HEK293 (cell line): ENCODE measurements at regions of chrX and their contacts with region 1.

Region 1: DNA sequence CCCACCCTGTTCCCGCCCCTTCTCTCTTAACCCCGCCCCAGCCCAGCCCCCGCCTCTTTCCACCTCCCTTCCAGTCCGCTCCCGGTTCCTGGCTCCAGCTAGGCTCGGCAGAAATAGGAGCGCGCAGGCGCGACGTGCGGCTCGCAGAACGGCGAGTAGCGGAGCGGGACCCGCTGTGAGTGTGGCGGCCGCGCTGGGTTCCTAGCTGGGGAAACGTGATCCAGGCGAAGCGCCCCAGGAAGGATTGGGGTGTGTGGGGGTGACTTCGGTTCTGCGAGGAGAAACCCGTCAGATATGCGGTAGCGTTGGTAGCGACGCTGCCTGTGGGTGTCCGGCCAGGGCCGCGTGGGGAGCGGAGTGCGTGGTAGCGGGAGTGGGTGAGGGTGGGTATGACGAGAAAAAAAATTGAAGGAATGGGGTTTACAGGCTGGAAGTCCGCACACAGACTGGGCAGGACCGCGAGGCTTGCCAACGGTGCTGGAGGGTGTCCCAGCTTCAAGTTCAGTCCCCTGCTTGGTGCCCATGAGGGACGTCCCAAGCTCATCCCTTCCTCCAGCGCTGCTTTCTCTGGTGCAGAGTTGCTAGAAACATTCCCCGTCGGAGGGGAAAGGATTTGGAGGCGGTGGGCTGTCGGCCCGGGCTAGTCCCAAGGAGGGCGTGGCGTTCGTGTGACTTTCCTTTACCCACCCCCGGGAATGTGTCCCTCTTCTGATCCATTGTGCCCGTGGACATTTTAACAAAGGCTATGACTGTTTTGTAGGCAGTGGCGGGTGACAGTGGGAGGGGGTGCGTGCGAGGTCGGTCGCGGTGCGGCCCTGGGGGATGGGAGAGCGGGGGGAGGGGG is at the start of gene PRRG1:
- H3K4me3 ChIP-seq: peak within 1 kb of the TSS; percentile 80
- H3K27ac ChIP-seq: peak within 1 kb of the TSS; percentile 83
- H3K4me1 ChIP-seq: no peaks in the 10 kb centered on the region
- CTCF ChIP-seq: no peak

Region 2: GRCh38 chrX:37332987-37333658 is 16.3 kb before region 1 on chrX:
- CTCF ChIA-PET with region 1: no interaction called
- POLR2A ChIA-PET with region 1: no interaction called
- H3K4me3 ChIP-seq: no peak overlapping the region
- H3K27ac ChIP-seq: no peak overlapping the region
- H3K4me1 ChIP-seq: no peaks in the 10 kb centered on the region
- CTCF ChIP-seq: no peak

Region 3: GRCh38 chrX:37364666-37365065 is 15.2 kb after region 1 on chrX:
- CTCF ChIA-PET with region 1: no interaction called
- POLR2A ChIA-PET with region 1: no interaction called
- H3K4me3 ChIP-seq: no peak overlapping the region
- H3K27ac ChIP-seq: no peak overlapping the region
- H3K4me1 ChIP-seq: no peaks in the 10 kb centered on the region
- CTCF ChIP-seq: no peak

Region 4: DNA sequence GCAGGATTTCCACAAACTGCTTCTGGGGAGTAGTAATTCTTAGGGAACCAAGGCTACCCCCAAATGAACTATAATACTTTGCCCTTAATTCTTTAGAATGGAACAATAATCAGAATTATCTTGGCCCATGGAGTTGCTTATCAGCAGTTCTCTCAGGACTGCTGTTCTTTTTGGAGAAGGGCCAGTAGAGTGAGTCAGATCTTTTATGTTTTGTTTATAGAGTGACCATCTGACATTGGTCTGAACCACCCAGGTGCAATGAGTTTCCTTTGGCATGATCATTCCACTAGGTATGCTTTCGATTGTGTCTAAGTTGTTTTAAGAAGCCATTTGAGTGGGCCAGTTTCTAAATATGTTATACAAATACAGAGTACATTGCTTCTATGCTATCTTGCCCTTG is 31.5 kb after region 1 on chrX:
- CTCF ChIA-PET with region 1: no interaction called
- POLR2A ChIA-PET with region 1: interaction called, 11 read pairs
- H3K4me3 ChIP-seq: no peak overlapping the region
- H3K27ac ChIP-seq: no peak overlapping the region
- H3K4me1 ChIP-seq: peaks cover 22% of the 10 kb centered on the region
- CTCF ChIP-seq: no peak